CD4-positive, alpha-beta T cell (primary cell): ENCODE measurements at regions of chr19 and their contacts with region 1.

Region 1: DNA sequence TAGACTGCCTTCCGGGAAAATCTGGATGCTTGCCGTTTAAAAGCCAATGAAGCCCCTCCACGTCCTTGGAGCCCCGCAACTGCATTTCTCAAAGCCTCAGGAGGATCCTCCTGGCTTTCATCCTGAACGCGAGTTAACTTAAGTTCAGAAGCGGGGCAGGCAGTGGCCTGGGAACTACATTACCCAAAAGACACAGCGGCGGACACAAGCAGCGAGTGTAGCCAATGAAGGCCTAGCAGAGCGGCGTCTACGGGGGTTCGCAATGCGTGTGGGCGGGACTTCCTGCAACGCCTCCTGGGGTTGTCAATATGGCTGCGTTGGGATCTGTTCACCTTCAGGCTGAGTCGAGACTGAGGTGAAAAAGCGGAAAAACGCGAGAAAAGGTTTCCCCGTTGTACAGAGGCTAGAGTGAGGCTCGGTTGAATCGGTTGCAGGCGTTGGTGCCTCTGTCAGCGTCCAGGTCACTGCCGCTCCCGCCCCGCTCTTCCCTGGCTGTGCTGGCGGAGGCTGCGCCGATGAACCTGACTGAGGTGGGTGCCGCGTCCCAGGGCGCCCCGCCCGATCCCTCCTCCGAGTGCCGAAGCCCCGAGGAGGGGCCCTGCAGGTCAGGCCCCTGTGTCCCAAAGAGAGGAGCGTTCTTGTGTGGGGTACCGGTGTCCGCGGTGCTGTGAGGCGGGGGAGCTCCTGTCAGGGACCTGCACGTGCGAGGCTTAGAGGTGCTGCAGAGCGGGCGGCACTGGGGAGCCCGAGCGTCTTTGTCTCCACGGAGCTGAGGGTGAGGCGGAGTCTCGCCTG is at the start of gene ZNF17:
- DNase-seq: peak; percentile 81 to 96 (median 90)
- ATAC-seq: peak; percentile 99
- H3K4me3 ChIP-seq: peak within 1 kb of the TSS; percentile 79
- H3K4me3 Mint-ChIP-seq: peak within 1 kb of the TSS; percentile 97
- H3K27ac ChIP-seq: peak within 1 kb of the TSS; percentile 58 to 68
- H3K27ac Mint-ChIP-seq: peak within 1 kb of the TSS; percentile 91
- H3K4me1 ChIP-seq: peaks cover 20% of the 10 kb centered on the region
- H3K4me1 Mint-ChIP-seq: peaks cover 39% of the 10 kb centered on the region
- H3K27me3 ChIP-seq: no peaks in the 10 kb centered on the region
- H3K27me3 Mint-ChIP-seq: no peaks in the 10 kb centered on the region
- CTCF ChIP-seq: no peak
- total RNA-seq, gene ZNF17: 9.3 to 10.0 TPM

Region 2: DNA sequence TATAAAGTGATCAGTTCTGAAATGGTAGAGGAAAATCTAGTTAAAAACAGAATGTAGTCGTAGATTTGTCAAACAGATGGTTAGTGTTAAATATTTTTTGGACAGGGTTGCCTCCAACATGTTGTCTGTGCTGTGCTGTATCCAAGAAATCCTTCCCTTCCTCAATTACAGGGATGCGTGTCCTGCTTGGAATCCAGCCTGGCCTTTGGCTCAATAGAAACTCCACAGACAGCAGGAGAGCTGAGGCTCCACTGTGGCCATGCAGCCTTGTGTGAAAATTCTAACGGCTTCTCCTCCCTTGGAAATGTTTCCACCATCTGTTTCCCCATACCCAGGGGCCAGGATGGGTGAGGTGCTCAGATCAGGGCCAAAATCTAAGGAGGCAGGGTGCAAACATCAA is 359.0 kb before region 1 on chr19:
- CTCF ChIA-PET with region 1: no interaction called
- POLR2A ChIA-PET with region 1: no interaction called
- intact Hi-C with region 1: no loop called
- DNase-seq: no peak
- ATAC-seq: no peak
- H3K4me3 ChIP-seq: no peak overlapping the region
- H3K4me3 Mint-ChIP-seq: no peak overlapping the region
- H3K27ac ChIP-seq: no peak overlapping the region
- H3K27ac Mint-ChIP-seq: no peak overlapping the region
- H3K4me1 ChIP-seq: no peaks in the 10 kb centered on the region
- H3K4me1 Mint-ChIP-seq: no peaks in the 10 kb centered on the region
- H3K27me3 ChIP-seq: no peaks in the 10 kb centered on the region
- H3K27me3 Mint-ChIP-seq: no peaks in the 10 kb centered on the region
- CTCF ChIP-seq: no peak

Region 3: DNA sequence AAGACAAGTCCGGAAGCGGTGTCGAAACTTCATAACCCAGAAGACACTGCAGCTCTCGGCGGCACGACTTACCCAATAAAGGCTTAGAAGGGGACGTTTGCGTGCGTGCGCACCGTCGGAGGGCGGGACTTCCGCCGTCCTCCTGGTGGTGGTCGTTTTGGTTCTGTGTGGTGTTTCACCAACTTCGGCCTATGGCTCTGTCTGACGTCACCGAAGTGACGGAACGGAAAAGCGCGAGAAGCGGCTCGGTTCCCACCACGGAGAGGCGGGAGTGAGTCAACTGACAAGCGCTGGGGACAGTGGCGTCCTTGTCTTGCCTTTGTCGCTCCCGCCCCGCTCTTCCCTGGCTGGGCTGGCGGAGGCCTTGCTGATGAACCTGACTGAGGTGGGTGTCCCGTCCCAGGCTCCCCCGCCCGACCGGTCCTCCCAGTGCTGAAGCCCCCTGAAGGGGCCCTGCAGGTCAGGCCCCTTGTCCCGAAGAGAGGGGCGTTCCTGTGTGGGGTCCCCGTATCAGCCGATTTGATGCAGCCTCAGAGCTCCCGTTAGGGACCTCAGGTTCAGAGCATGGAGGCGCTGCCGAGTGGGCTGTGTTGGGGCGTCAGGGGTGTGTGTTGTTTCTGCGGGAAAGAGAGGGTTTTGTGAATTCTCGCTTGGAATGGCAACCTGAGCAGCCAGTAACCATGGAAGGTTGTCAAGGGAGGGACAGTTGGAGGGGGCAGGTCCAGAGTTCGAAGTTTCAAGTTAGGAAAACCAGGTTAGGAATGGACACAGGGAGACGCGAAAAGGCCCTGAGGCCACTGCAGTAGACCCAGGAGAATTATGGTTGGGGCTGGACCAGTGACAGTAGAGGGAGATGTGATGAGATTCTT is 21.1 kb before region 1 on chr19 and contains the start of gene ZNF548:
- CTCF ChIA-PET with region 1: interaction called, 7 read pairs
- POLR2A ChIA-PET with region 1: interaction called, 5 read pairs
- intact Hi-C with region 1: loop called (anchors 1 kb)
- DNase-seq: peak; percentile 87 to 99 (median 95)
- ATAC-seq: peak; percentile 96
- H3K4me3 ChIP-seq: peak within 1 kb of the TSS; percentile 86
- H3K4me3 Mint-ChIP-seq: peak within 1 kb of the TSS; percentile 98
- H3K27ac ChIP-seq: peak within 1 kb of the TSS; percentile 86 to 95
- H3K27ac Mint-ChIP-seq: peak within 1 kb of the TSS; percentile 95
- H3K4me1 ChIP-seq: peaks cover 18% of the 10 kb centered on the region
- H3K4me1 Mint-ChIP-seq: peaks cover 33% of the 10 kb centered on the region
- H3K27me3 ChIP-seq: no peaks in the 10 kb centered on the region
- H3K27me3 Mint-ChIP-seq: no peaks in the 10 kb centered on the region
- CTCF ChIP-seq: no peak
- total RNA-seq, gene ZNF548: 68.3 to 70.4 TPM

Region 4: DNA sequence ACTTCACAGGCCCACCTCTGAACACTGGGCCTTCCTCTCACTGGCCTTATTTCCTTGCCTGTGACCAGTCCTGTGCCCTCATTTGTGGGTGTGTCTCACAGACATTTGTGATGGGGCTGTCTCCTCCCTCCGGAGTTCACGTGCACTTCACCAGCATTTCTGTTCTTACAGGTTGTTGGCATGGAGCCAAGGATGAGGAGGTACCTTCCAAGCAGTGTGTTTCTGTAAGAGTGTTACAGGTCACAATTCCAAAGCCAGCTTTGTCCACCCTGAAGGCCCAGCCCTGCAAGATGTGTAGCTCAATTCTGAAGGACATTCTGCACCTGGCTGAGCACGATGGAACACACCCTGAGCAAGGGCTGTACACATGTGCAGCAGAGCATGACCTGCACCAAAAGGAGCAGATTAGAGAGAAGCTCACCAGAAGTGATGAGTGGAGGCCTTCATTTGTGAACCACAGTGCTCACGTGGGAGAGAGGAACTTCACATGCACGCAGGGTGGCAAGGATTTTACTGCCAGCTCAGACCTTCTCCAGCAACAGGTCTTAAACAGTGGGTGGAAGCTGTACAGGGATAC is 32.1 kb after region 1 on chr19:
- CTCF ChIA-PET with region 1: no interaction called
- POLR2A ChIA-PET with region 1: no interaction called
- intact Hi-C with region 1: no loop called
- DNase-seq: no peak
- ATAC-seq: no peak
- H3K4me3 ChIP-seq: no peak overlapping the region
- H3K4me3 Mint-ChIP-seq: no peak overlapping the region
- H3K27ac ChIP-seq: no peak overlapping the region
- H3K27ac Mint-ChIP-seq: no peak overlapping the region
- H3K4me1 ChIP-seq: no peaks in the 10 kb centered on the region
- H3K4me1 Mint-ChIP-seq: peaks cover 5% of the 10 kb centered on the region
- H3K27me3 ChIP-seq: no peaks in the 10 kb centered on the region
- H3K27me3 Mint-ChIP-seq: no peaks in the 10 kb centered on the region
- CTCF ChIP-seq: no peak

Region 5: GRCh38 chr19:57559404-57560025 is 148.4 kb after region 1 on chr19 and contains the start of gene ZNF550:
- CTCF ChIA-PET with region 1: no interaction called
- POLR2A ChIA-PET with region 1: no interaction called
- intact Hi-C with region 1: loop called in 1 of 2 experiments (anchors 2 kb)
- DNase-seq: peak; percentile 77 to 93 (median 86)
- ATAC-seq: peak; percentile 98
- H3K4me3 ChIP-seq: peak within 1 kb of the TSS; percentile 94
- H3K4me3 Mint-ChIP-seq: peak within 1 kb of the TSS; percentile 95
- H3K27ac ChIP-seq: peak within 1 kb of the TSS; percentile 44 to 45
- H3K27ac Mint-ChIP-seq: peak within 1 kb of the TSS; percentile 64
- H3K4me1 ChIP-seq: peaks cover 25% of the 10 kb centered on the region
- H3K4me1 Mint-ChIP-seq: peaks cover 34% of the 10 kb centered on the region
- H3K27me3 ChIP-seq: peaks cover 0 to 5% of the 10 kb centered on the region in 2 experiments
- H3K27me3 Mint-ChIP-seq: peaks cover 9% of the 10 kb centered on the region
- CTCF ChIP-seq: no peak
- total RNA-seq, gene ZNF550: 15.7 to 20.0 TPM

Region 6: GRCh38 chr19:57819475-57820148 is 408.5 kb after region 1 on chr19:
- CTCF ChIA-PET with region 1: no interaction called
- POLR2A ChIA-PET with region 1: no interaction called
- intact Hi-C with region 1: loop called in 1 of 2 experiments (anchors 5 kb)
- DNase-seq: peak; percentile 64 to 95 (median 73)
- ATAC-seq: peak; percentile 83
- H3K4me3 ChIP-seq: peak overlapping the region; percentile 98
- H3K4me3 Mint-ChIP-seq: peak overlapping the region; percentile 96
- H3K27ac ChIP-seq: peak overlapping the region; percentile 78 to 90
- H3K27ac Mint-ChIP-seq: peak overlapping the region; percentile 92
- H3K4me1 ChIP-seq: peaks cover 29% of the 10 kb centered on the region
- H3K4me1 Mint-ChIP-seq: peaks cover 56% of the 10 kb centered on the region
- H3K27me3 ChIP-seq: no peaks in the 10 kb centered on the region
- H3K27me3 Mint-ChIP-seq: no peaks in the 10 kb centered on the region
- CTCF ChIP-seq: peak; percentile 34

Region 7: GRCh38 chr19:58002384-58003173 is 591.5 kb after region 1 on chr19 and contains the start of gene ZNF606:
- CTCF ChIA-PET with region 1: no interaction called
- POLR2A ChIA-PET with region 1: no interaction called
- intact Hi-C with region 1: loop called in 1 of 2 experiments (anchors 5 kb)
- DNase-seq: peak; percentile 69 to 93 (median 81)
- ATAC-seq: peak; percentile 96
- H3K4me3 ChIP-seq: peak within 1 kb of the TSS; percentile 95
- H3K4me3 Mint-ChIP-seq: peak within 1 kb of the TSS; percentile 90
- H3K27ac ChIP-seq: peak within 1 kb of the TSS; percentile 71 to 87
- H3K27ac Mint-ChIP-seq: peak within 1 kb of the TSS; percentile 93
- H3K4me1 ChIP-seq: peaks cover 24% of the 10 kb centered on the region
- H3K4me1 Mint-ChIP-seq: peaks cover 23% of the 10 kb centered on the region
- H3K27me3 ChIP-seq: no peaks in the 10 kb centered on the region
- H3K27me3 Mint-ChIP-seq: no peaks in the 10 kb centered on the region
- CTCF ChIP-seq: no peak
- total RNA-seq, gene ZNF606: 11.1 to 13.6 TPM